ENCODE measurements at regions of chr17 and their contacts with region 1.

Region 1: DNA sequence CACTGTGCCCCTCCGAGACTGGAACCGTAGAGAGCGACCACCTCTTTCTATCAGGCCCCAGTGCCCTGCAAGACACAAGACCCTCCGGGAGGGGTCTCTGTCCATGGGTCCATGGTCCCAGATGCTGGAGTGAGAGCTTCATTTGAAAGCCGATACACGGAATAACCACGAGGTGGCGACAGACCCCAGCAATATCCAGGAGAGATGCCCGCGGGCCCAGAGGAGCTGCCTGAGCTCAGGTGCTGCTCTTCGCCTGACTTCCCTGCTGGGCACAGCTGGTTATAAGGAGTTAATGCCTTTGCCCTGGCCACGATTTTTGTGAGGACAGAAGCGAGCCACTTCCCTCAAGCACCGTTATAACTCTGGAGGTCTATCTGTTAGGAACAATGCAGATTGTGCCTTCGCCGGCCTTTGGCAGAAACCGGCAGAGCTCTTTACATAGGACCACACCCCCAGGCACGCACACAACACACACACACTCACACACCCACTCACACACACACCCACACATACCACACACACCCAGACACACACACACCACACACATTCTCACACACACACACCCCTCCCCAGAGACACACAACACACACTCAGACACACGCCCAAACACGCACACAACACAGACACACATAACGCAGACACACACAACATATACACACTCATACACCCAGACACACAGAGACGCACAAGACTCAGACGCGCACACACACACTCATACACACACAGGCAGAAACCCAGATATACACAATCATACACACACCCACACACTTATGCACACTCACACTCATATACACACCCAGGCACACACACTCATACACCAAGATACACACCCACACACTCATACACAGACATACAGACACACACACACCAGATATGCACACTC is 436.4 kb downstream of the SOX9 start:
- DNase-seq: peak; percentile 77
- H3K4me3 Mint-ChIP-seq: no peak overlapping the region
- H3K27ac Mint-ChIP-seq: no peak overlapping the region
- H3K4me1 Mint-ChIP-seq: peaks cover 4% of the 10 kb centered on the region
- H3K27me3 Mint-ChIP-seq: no peaks in the 10 kb centered on the region

Region 2: GRCh38 chr17:72545766-72546165 is 11.4 kb before region 1 on chr17:
- CTCF ChIA-PET with region 1: interaction called, 10 read pairs
- POLR2A ChIA-PET with region 1: no interaction called
- DNase-seq: no peak
- H3K4me3 Mint-ChIP-seq: no peak overlapping the region
- H3K27ac Mint-ChIP-seq: no peak overlapping the region
- H3K4me1 Mint-ChIP-seq: no peaks in the 10 kb centered on the region
- H3K27me3 Mint-ChIP-seq: no peaks in the 10 kb centered on the region

Region 3: DNA sequence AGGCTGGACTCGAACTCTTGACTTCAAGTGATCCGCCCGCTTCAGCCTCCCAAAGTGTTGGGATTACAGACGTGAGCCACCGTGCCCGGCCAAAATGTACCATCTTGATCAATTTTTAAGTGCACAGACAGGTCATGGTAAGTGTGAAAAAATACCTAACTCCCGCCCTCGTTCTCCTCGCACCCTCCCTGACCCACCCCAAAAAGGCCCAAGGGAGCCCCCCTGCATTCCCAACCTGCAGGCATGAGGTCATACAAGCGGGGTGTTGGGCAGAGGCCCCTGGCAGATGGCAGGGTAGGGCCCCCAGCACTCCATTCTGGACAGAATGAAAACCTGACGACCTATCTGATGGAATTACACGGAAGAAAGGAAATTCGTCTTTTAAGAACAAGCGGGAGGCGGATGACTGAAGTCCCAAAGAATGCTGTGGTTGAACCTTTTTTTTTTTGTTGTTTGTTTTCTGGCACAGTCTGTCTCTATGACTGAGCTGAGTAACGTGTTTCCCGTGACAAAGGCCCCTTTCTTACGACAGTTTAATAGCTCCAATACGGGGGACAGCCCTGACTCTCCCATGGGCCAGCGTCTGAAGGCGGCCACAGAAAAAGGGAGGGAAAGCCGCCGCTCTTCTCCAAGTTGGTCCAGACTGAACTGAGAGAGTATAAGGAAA is 158.9 kb after region 1 on chr17:
- CTCF ChIA-PET with region 1: interaction called, 30 read pairs
- POLR2A ChIA-PET with region 1: interaction called, 3 read pairs
- DNase-seq: no peak
- H3K4me3 Mint-ChIP-seq: no peak overlapping the region
- H3K27ac Mint-ChIP-seq: no peak overlapping the region
- H3K4me1 Mint-ChIP-seq: peaks cover 69% of the 10 kb centered on the region
- H3K27me3 Mint-ChIP-seq: no peaks in the 10 kb centered on the region

Region 4: GRCh38 chr17:73156166-73156840 is 599.1 kb after region 1 on chr17:
- CTCF ChIA-PET with region 1: interaction called, 23 read pairs
- POLR2A ChIA-PET with region 1: no interaction called
- DNase-seq: peak; percentile 64
- H3K4me3 Mint-ChIP-seq: no peak overlapping the region
- H3K27ac Mint-ChIP-seq: no peak overlapping the region
- H3K4me1 Mint-ChIP-seq: peaks cover 11% of the 10 kb centered on the region
- H3K27me3 Mint-ChIP-seq: peaks cover 16% of the 10 kb centered on the region

Region 5: DNA sequence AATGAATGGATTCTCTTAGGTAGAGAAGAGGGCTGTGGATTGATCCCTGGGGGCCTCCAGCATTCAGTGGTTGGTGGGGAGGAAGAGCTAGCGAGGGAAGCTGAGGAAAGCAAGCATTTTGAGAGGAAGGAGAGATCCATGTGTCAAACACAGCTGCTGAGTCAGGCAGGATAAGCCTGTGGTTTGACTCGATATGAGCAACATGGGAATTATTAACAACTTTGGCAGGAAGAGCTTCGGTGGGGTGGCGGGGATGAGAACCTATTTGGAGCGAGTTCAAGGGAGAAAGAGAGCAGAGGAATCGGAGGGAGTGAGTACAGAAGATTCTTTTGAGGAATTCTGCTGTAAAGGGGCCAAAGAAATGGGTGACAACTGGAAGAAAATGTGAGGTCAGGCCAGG is 814.1 kb after region 1 on chr17:
- CTCF ChIA-PET with region 1: interaction called, 25 read pairs
- POLR2A ChIA-PET with region 1: no interaction called
- DNase-seq: no peak
- H3K4me3 Mint-ChIP-seq: no peak overlapping the region
- H3K27ac Mint-ChIP-seq: no peak overlapping the region
- H3K4me1 Mint-ChIP-seq: no peaks in the 10 kb centered on the region
- H3K27me3 Mint-ChIP-seq: peaks cover 8% of the 10 kb centered on the region

Measured in activated CD4-positive, alpha-beta memory T cell treated with anti-CD3 and anti-CD28 coated beads, Interleukin-2, amount 10 ng/mL, durations not matched to agents 7 days and 5 days (primary cell).